IMR-90 (cell line): ENCODE measurements at regions of chr14 and their contacts with region 1.

Region 1: DNA sequence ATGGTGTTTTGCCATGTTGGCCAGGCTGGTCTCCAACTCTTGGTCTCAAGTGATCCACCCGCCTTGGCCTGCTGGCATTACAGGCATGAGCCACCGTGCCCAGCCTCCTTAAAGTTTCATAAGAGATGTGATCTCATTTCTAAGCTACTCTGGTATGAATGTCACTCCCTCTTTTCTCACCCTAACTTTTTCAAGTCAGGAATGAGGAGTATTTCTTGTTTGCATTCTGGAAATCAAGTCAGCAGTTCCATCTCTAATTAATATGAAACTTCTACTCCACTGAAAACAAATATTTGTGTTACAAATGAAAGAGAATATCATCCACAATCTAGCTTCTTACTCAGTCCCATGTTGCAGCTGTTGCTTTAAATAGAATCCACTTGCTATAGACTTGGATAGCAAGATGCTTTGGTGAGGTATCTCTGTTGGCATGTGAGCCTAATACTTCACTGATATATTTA is 61.3 kb downstream of the ARF6 start:
- DNase-seq: peak; percentile 71
- ATAC-seq: peak; percentile 83
- H3K4me3 ChIP-seq: no peak overlapping the region
- H3K27ac ChIP-seq: peak overlapping the region; percentile 36; the same call in 1 of the 2 replicates
- H3K4me1 ChIP-seq: peaks cover 11% of the 10 kb centered on the region
- H3K27me3 ChIP-seq: no peaks in the 10 kb centered on the region
- CTCF ChIP-seq: no peak
- POLR2A ChIP-seq: no peak
- RAD21 ChIP-seq: no peak

Region 2: GRCh38 chr14:49920935-49921334 is 33.3 kb before region 1 on chr14:
- CTCF ChIA-PET with region 1: no interaction called
- POLR2A ChIA-PET with region 1: interaction called, 15 read pairs
- dilution Hi-C with region 1: no loop called
- in situ Hi-C with region 1: no loop called
- intact Hi-C with region 1: no loop called
- DNase-seq: no peak
- ATAC-seq: no peak
- H3K4me3 ChIP-seq: no peak overlapping the region
- H3K27ac ChIP-seq: no peak overlapping the region
- H3K4me1 ChIP-seq: no peaks in the 10 kb centered on the region
- H3K27me3 ChIP-seq: no peaks in the 10 kb centered on the region
- CTCF ChIP-seq: no peak
- POLR2A ChIP-seq: no peak
- RAD21 ChIP-seq: no peak

Region 3: DNA sequence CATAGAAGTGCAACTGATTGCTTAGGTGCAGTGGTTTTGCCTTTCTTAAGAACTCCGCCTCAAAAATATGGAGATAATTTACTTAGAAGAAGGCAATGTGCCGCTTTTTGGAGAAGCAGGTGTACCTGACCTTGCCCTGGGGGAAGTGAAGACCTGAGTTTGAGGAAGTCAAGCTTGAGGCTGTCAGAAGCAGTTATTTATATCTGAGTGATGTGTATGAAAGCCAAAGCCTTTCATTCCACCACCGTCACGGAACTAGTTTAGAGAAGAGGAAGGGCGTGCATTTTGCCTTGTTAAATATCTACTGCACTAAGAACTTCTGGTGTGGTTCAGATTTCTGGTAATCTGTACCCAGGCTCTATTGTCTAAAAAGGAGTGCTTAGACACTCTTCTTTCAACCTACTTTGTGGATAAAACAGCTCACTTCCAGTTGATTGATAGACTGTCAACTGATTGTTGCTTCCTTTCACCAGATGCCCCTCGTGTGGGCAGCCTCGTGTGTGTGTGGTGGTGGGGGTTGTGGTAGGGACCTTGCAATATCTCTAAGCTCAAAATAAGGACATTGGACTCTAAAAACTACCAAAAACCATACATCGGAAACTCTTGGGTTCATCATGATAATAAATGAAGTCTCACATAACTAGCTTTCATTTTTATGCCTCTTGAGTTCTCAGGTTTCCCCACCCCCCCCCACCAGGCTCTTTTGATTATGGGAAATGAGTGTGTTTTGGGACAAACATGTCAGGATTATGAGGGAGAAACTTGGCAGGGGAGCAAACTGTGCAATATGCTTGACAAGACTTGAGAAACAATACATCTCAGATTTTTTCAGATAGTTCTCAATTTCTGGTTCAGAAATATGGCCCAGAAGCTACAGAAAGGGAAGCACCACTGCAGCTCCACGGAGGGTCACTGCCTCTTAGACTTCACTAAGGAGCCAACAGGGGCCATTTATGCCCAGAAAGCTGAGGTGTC is 17.2 kb after region 1 on chr14:
- CTCF ChIA-PET with region 1: interaction called, 5 read pairs
- POLR2A ChIA-PET with region 1: interaction called, 3 read pairs
- dilution Hi-C with region 1: no loop called
- in situ Hi-C with region 1: no loop called
- intact Hi-C with region 1: loop called (anchors 1 kb)
- DNase-seq: peak; percentile 25
- ATAC-seq: peak; percentile 5
- H3K4me3 ChIP-seq: no peak overlapping the region
- H3K27ac ChIP-seq: peak overlapping the region; percentile 97
- H3K4me1 ChIP-seq: peaks cover 36% of the 10 kb centered on the region
- H3K27me3 ChIP-seq: no peaks in the 10 kb centered on the region
- CTCF ChIP-seq: no peak
- POLR2A ChIP-seq: no peak
- RAD21 ChIP-seq: no peak

Region 4: GRCh38 chr14:50106178-50106577 is 152.0 kb after region 1 on chr14:
- CTCF ChIA-PET with region 1: no interaction called
- POLR2A ChIA-PET with region 1: no interaction called
- dilution Hi-C with region 1: no loop called
- in situ Hi-C with region 1: no loop called
- intact Hi-C with region 1: no loop called
- DNase-seq: no peak
- ATAC-seq: no peak
- H3K4me3 ChIP-seq: no peak overlapping the region
- H3K27ac ChIP-seq: no peak overlapping the region
- H3K4me1 ChIP-seq: 0 out of 2 replicates have a peak, but pooled peaks cover 2% of the 10 kb centered on the region
- H3K27me3 ChIP-seq: no peaks in the 10 kb centered on the region
- CTCF ChIP-seq: no peak
- POLR2A ChIP-seq: no peak
- RAD21 ChIP-seq: no peak